Gastrocnemius medialis (tissue), 4 donors: ENCODE measurements at regions of chr11 and their contacts with region 1.

Region 1: DNA sequence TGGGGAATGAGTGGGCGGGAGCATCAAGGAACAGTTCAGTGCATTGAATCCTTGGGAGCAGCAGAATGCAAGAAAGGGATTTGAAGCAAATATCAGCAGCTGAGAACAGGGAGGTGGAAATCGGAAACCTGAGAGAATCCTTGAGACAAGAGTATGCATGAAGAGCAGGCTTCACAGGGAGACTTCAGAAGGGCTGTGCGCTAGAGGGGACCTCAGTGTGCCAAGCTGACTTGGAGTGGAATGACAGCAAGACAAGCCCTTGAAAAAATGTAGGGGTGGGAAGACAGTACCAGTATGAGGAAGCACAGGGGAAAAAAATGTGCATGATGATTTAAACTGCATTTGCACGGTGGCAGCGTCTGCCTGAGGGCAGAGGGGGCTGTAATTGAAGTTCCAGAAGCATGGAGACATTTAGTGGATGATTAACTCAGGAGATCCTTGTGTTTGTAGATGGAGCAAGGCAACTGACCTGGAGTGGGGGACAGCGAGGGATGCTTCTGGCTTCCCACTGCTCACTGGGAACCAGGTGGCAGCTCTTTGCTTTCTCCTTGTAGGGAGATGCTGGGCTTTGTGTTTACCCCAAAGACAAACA is 204.9 kb upstream of the PLET1 start:
- DNase-seq: no peak
- ATAC-seq: no peak
- H3K4me3 ChIP-seq: no peak overlapping the region
- H3K27ac ChIP-seq: no peak overlapping the region
- H3K4me1 ChIP-seq: peaks cover 8 to 11% of the 10 kb centered on the region in 2 donors
- H3K27me3 ChIP-seq: no peaks in the 10 kb centered on the region
- CTCF ChIP-seq: no peak
- POLR2A ChIP-seq: no peak

Region 2: GRCh38 chr11:112129656-112130055 is 335.9 kb before region 1 on chr11:
- in situ Hi-C with region 1: no loop called
- intact Hi-C with region 1: loop called (anchors 5 kb)
- DNase-seq: peak; percentile 6 to 20
- ATAC-seq: no peak
- H3K4me3 ChIP-seq: no peak overlapping the region
- H3K27ac ChIP-seq: no peak overlapping the region
- H3K4me1 ChIP-seq: peaks cover 0 to 22% of the 10 kb centered on the region in 2 donors
- H3K27me3 ChIP-seq: no peaks in the 10 kb centered on the region
- CTCF ChIP-seq: no peak
- POLR2A ChIP-seq: no peak